Aorta (tissue), 5 donors: ENCODE measurements at regions of chr11 and their contacts with region 1.

Region 1: DNA sequence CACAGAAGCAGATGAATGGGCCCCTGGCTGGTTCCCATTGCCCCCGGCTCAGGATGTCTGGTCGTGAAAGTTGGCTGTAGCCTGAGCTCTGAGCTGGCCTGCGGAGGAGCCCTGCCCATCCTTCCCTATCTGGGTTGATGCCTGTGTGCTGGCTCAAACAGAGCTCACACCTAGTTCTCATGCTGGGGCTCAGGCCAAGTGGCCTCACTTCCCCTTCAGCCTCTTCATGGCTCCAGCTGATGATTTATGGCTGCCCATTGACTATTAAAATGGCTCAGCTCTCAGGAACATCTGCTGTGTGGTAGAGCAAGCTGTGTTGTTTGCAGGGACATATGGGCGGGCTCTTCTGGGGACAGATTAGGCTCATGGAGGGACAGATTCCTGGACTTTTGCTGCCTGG is 64.7 kb downstream of the ADAMTS15 start:
- DNase-seq: peak in 1 of 2 donors; percentile 51
- ATAC-seq: peak; percentile 42
- H3K4me3 ChIP-seq: no peak overlapping the region
- H3K27ac ChIP-seq: no peak overlapping the region
- H3K4me1 ChIP-seq: no peaks in the 10 kb centered on the region
- H3K27me3 ChIP-seq: no peaks in the 10 kb centered on the region

Region 2: GRCh38 chr11:130478204-130478701 is 34.9 kb before region 1 on chr11:
- intact Hi-C with region 1: loop called in 1 of 2 experiments (anchors 5 kb)
- DNase-seq: peak; percentile 81 to 92
- ATAC-seq: peak; percentile 79
- H3K4me3 ChIP-seq: no peak overlapping the region
- H3K27ac ChIP-seq: peak overlapping the region; percentile 58 to 93
- H3K4me1 ChIP-seq: peaks cover 0 to 7% of the 10 kb centered on the region in 2 donors
- H3K27me3 ChIP-seq: no peaks in the 10 kb centered on the region